ENCODE measurements at regions of chr15 and their contacts with region 1.

Region 1: DNA sequence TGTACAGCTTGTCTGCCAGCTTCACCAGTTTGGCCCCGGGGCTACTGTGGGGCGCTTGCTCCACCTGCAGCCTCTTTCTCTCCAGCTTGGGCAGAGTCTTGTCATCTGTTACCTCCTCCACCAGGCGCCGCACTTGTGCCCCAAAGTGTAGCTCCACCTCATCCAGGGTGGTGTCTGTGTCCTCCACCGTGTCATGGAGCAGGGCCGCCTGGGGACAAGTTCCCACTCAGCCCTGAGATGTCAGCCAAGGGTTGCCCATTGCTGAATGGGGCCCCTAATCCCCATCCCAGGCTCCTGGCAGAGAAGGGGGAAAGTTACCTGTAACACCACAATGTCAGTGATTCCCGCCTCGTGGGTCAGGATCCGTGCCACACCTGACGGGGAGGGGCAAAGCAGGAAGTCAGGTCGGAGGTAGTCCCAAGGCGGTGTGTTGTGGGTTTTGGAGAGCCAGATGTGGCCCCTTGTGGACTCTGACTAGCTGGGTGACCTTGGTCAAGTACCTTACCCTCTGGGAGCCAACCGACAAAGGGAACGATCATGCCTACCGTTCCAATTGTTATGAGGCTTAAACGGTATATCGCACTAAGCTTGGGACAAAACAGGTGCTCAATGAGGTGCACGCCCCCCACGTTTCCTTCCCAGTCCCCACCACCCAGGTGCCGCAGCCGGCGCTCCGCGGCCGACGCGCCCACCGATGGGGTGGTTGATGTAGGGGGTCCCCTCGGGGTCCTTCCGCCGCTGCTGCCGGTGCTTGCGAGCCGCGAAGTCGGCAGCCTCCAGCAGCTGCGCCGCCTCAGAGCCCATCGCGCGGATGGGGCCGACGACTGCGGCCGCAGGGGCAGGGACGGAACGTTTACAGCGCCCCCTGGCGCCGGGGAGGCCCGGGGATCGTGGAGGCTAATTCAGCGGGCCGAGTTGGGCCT is at the start of gene HDDC3:
- DNase-seq: peak; percentile 86
- ATAC-seq: peak; percentile 69
- H3K4me3 ChIP-seq: peak within 1 kb of the TSS; percentile 67 to 91 (median 87)
- H3K27ac ChIP-seq: peak within 1 kb of the TSS; percentile 96
- H3K4me1 ChIP-seq: peaks cover 61% of the 10 kb centered on the region
- H3K27me3 ChIP-seq: no peaks in the 10 kb centered on the region; a peak in 2 of 5 replicates
- CTCF ChIP-seq: peak; percentile 93
- EP300 ChIP-seq: no peak
- POLR2A ChIP-seq: peak in 1 of 2 experiments; percentile 74; a peak in 2 of 4 replicates
- RAD21 ChIP-seq: peak; percentile 52; the same call in 1 of the 2 replicates
- total RNA-seq, gene HDDC3: 28.3 and 30.0 TPM in 2 replicates

Region 2: DNA sequence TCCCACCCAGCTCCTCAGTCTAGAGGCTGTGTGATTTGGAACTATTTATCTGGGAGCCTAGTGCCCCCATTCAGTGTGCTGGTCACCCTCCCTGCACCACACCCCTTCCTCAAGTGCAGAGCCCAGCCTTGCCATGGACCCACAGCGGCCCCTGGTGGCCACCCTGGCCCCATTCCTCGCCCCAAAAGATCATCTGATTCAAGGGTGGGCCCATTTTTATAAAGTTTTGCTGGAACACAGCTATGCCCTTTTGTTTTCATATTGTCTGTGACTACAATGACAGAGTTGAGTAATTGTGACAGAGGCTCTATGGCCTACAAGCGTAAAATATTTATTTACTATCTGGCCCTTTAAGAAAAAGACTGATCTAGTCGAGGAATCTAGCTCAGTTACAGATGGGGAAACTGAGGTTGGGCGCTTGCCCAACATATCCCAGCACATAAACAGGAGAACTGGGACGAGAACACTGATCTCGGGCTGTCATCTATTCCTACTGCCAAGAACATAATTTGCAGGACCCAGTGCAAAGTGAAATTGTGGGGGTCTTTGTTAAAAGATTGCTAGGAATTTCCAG is 45.9 kb before region 1 on chr15:
- CTCF ChIA-PET with region 1: no interaction called
- POLR2A ChIA-PET with region 1: interaction called, 6 read pairs
- in situ Hi-C with region 1: no loop called
- intact Hi-C with region 1: loop called (anchors 5 kb)
- DNase-seq: no peak
- ATAC-seq: peak; percentile 58
- H3K4me3 ChIP-seq: peak overlapping the region in 1 of 3 experiments; percentile 23; a peak in 1 of 6 replicates
- H3K27ac ChIP-seq: no peak overlapping the region
- H3K4me1 ChIP-seq: peaks cover 36% of the 10 kb centered on the region
- H3K27me3 ChIP-seq: peaks cover 0 to 7% of the 10 kb centered on the region in 2 experiments; a peak in 2 of 5 replicates
- CTCF ChIP-seq: peak; percentile 94
- EP300 ChIP-seq: no peak
- POLR2A ChIP-seq: no peak
- RAD21 ChIP-seq: peak; percentile 96

Region 3: DNA sequence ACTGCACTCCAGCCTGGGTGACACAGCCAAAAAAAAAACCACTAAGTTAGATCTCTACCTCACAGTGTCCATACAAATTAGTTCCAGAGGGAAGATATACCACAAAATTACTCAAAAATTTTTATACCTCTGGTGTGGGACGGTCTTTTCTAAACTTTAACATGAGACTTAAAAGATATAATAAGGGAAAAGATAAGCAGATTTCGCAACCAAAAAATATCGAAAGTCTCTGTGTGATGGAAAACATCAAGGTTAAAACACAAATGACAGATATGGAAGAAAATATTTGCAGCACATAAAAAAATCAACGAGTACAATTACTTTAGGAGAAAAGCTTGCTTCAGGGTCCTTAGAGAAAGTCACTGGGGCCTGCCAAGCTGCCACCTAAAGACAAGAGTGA is 10.1 kb before region 1 on chr15:
- CTCF ChIA-PET with region 1: no interaction called
- POLR2A ChIA-PET with region 1: interaction called, 24 read pairs
- in situ Hi-C with region 1: no loop called
- intact Hi-C with region 1: no loop called
- DNase-seq: no peak
- ATAC-seq: no peak
- H3K4me3 ChIP-seq: no peak overlapping the region
- H3K27ac ChIP-seq: no peak overlapping the region
- H3K4me1 ChIP-seq: peaks cover 16% of the 10 kb centered on the region
- H3K27me3 ChIP-seq: no peaks in the 10 kb centered on the region
- CTCF ChIP-seq: no peak
- EP300 ChIP-seq: no peak
- POLR2A ChIP-seq: no peak
- RAD21 ChIP-seq: no peak

Region 4: GRCh38 chr15:90994417-90995311 is 62.7 kb after region 1 on chr15 and contains the start of gene PRC1:
- CTCF ChIA-PET with region 1: no interaction called
- POLR2A ChIA-PET with region 1: interaction called, 5 read pairs
- in situ Hi-C with region 1: no loop called
- intact Hi-C with region 1: loop called (anchors 10 kb)
- DNase-seq: peak; percentile 95
- ATAC-seq: peak; percentile 97
- H3K4me3 ChIP-seq: peak within 1 kb of the TSS; percentile 96 to 100 (median 99)
- H3K27ac ChIP-seq: peak within 1 kb of the TSS; percentile 93
- H3K4me1 ChIP-seq: peaks cover 25% of the 10 kb centered on the region
- H3K27me3 ChIP-seq: no peaks in the 10 kb centered on the region
- CTCF ChIP-seq: peak; percentile 40
- EP300 ChIP-seq: 0 out of 4 replicates have a peak, but pooled peaks of 1 of the 2 experiments have one; percentile 55
- POLR2A ChIP-seq: peak; percentile 60 to 87
- RAD21 ChIP-seq: no peak
- total RNA-seq, gene PRC1: 162 and 214 TPM in 2 replicates

Region 5: GRCh38 chr15:91049378-91050127 is 117.6 kb after region 1 on chr15:
- CTCF ChIA-PET with region 1: no interaction called
- POLR2A ChIA-PET with region 1: no interaction called
- in situ Hi-C with region 1: no loop called
- intact Hi-C with region 1: loop called (anchors 5 kb)
- DNase-seq: peak; percentile 70
- ATAC-seq: peak; percentile 97
- H3K4me3 ChIP-seq: peak overlapping the region; percentile 25 to 65 (median 27); a peak in 5 of 6 replicates
- H3K27ac ChIP-seq: no peak overlapping the region
- H3K4me1 ChIP-seq: peaks cover 13% of the 10 kb centered on the region; the same call in 1 of the 2 replicates
- H3K27me3 ChIP-seq: peaks cover 0 to 8% of the 10 kb centered on the region in 2 experiments; a peak in 2 of 5 replicates
- CTCF ChIP-seq: peak; percentile 80
- EP300 ChIP-seq: no peak
- POLR2A ChIP-seq: no peak
- RAD21 ChIP-seq: peak; percentile 49